K562 (cell line): ENCODE measurements at regions of chr9 and their contacts with region 1.

Region 1: DNA sequence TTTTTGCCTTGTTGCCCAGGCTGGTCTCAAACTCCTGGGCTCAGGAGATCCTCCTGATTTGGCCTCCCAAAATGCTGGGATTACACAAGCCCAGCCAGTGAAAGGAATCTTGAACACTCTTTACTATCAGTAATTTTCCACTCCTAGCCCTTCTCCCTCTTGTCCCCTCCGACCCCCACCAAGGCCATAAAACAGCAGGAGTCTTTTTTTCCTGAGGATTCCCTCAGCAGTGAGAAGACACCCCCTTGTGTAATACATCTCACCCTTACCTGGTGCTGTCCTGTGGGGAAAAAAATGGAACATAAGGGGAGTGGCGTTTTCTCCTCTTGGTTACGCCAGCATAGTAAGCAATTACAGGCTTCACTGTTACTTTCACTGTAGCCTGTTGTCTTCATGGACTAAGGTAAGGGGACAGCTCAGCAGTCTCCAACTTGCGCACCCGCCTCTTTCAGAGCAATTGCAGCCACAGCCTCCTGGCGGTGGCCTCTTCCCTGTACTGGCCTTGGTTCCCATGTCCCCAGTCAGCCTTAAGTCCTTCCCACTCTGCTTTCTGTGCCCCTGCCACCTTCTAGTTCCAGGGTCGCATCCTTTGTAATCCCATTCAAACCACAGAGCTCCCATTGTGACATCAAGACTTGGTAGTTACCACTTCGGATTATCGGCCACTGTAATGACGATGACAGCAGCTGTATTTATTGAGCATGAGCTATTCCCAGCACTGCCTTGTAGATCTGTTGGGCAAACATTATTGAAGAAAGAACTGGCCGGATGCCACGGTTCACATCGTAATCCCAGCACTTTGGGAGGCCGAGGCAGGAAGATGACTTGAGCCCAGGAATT is 10.0 kb downstream of the NAIF1 start:
- DNase-seq: peak in 1 of 4 experiments; percentile 8
- ATAC-seq: peak; percentile 58
- H3K4me3 ChIP-seq: no peak overlapping the region
- H3K27ac ChIP-seq: no peak overlapping the region
- H3K4me1 ChIP-seq: peaks cover 7 to 8% of the 10 kb centered on the region in 2 experiments; a peak in 3 of 5 replicates
- H3K27me3 ChIP-seq: no peaks in the 10 kb centered on the region
- CTCF ChIP-seq: no peak
- EP300 ChIP-seq: no peak
- POLR2A ChIP-seq: no peak
- RAD21 ChIP-seq: no peak

Region 2: DNA sequence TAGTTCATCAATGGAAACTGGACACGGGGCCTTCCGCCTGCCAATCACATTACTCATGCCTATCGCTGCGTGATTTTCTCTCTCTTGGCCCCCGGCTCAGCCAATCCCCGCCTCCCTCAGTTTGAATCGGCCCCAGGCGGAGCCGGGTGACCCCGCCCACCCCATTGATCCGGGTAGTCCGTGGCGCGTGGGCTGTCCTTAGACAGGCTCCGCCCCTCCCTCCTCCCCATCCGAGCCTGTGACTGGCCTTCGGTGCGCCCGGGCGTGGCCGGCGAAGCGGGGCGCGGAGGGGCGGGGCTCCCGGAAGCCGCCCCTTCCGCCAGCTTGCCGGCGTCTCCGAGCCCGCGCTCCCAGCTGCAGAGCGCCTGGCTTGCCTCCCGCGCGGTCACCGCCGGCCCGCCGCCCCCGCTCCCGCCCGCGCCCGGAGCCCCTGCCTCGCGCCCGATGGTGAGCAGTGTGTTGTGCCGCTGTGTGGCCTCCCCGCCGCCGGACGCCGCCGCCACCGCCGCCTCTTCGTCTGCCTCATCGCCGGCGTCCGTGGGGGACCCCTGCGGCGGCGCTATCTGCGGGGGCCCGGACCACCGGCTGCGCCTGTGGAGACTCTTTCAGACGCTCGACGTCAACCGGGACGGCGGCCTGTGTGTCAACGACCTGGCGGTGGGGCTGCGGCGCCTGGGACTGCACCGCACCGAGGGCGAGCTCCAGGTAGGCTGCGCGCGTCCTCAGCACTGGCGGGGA is 10.9 kb after region 1 on chr9 and contains the start of gene SLC25A25:
- CTCF ChIA-PET with region 1: no interaction called
- POLR2A ChIA-PET with region 1: interaction called, 14 read pairs
- in situ Hi-C with region 1: no loop called
- intact Hi-C with region 1: no loop called
- DNase-seq: peak; percentile 96 to 99 (median 98)
- ATAC-seq: peak; percentile 83
- H3K4me3 ChIP-seq: peak within 1 kb of the TSS; percentile 89
- H3K27ac ChIP-seq: peak within 1 kb of the TSS; percentile 95
- H3K4me1 ChIP-seq: peaks cover 33 to 45% of the 10 kb centered on the region in 2 experiments
- H3K27me3 ChIP-seq: no peaks in the 10 kb centered on the region
- CTCF ChIP-seq: no peak
- EP300 ChIP-seq: 0 out of 2 replicates have a peak, but pooled peaks have one; percentile 8
- POLR2A ChIP-seq: no peak
- RAD21 ChIP-seq: no peak
- polyA plus RNA-seq, gene SLC25A25: 0.07 to 0.10 TPM